Mammary epithelial cell (primary cell): ENCODE measurements at regions of chr20 and their contacts with region 1.

Region 1: GRCh38 chr20:3753098-3753980 is 14.2 kb downstream of the ADISSP start:
- DNase-seq: peak; percentile 41
- H3K4me3 ChIP-seq: no peak overlapping the region
- H3K27ac ChIP-seq: no peak overlapping the region
- H3K4me1 ChIP-seq: peaks cover 19% of the 10 kb centered on the region
- H3K27me3 ChIP-seq: no peaks in the 10 kb centered on the region
- CTCF ChIP-seq: peak; percentile 71 to 80

Region 2: GRCh38 chr20:3716195-3716834 is 37.0 kb before region 1 on chr20:
- CTCF ChIA-PET with region 1: interaction called, 5 read pairs
- dilution Hi-C with region 1: no loop called
- in situ Hi-C with region 1: no loop called
- intact Hi-C with region 1: loop called (anchors 2 kb)
- DNase-seq: peak; percentile 16
- H3K4me3 ChIP-seq: no peak overlapping the region
- H3K27ac ChIP-seq: no peak overlapping the region
- H3K4me1 ChIP-seq: no peaks in the 10 kb centered on the region
- H3K27me3 ChIP-seq: no peaks in the 10 kb centered on the region
- CTCF ChIP-seq: peak; percentile 61 to 72

Region 3: GRCh38 chr20:3767427-3768341 is 14.3 kb after region 1 on chr20 and contains the start of gene ADISSP:
- CTCF ChIA-PET with region 1: no interaction called
- dilution Hi-C with region 1: no loop called
- in situ Hi-C with region 1: no loop called
- intact Hi-C with region 1: loop called (anchors 1 kb)
- DNase-seq: peak; percentile 98
- H3K4me3 ChIP-seq: peak within 1 kb of the TSS; percentile 59 to 95 (median 77)
- H3K27ac ChIP-seq: peak within 1 kb of the TSS; percentile 79
- H3K4me1 ChIP-seq: peaks cover 19% of the 10 kb centered on the region
- H3K27me3 ChIP-seq: no peaks in the 10 kb centered on the region
- CTCF ChIP-seq: no peak
- total RNA-seq, gene ADISSP: 14.0 to 59.9 TPM

Region 4: GRCh38 chr20:3781153-3781910 is 28.0 kb after region 1 on chr20 and contains the start of gene SPEF1:
- CTCF ChIA-PET with region 1: interaction called, 14 read pairs
- dilution Hi-C with region 1: no loop called
- in situ Hi-C with region 1: no loop called
- intact Hi-C with region 1: loop called (anchors 1 kb)
- DNase-seq: peak; percentile 88
- H3K4me3 ChIP-seq: peak within 1 kb of the TSS; percentile 2 to 55 (median 51)
- H3K27ac ChIP-seq: peak within 1 kb of the TSS; percentile 11
- H3K4me1 ChIP-seq: peaks cover 44% of the 10 kb centered on the region
- H3K27me3 ChIP-seq: no peaks in the 10 kb centered on the region
- CTCF ChIP-seq: peak; percentile 7 to 56
- total RNA-seq, gene SPEF1: 0.17 to 0.26 TPM